Endothelial cell of umbilical vein (primary cell): ENCODE measurements at regions of chr21 and their contacts with region 1.

Region 1: DNA sequence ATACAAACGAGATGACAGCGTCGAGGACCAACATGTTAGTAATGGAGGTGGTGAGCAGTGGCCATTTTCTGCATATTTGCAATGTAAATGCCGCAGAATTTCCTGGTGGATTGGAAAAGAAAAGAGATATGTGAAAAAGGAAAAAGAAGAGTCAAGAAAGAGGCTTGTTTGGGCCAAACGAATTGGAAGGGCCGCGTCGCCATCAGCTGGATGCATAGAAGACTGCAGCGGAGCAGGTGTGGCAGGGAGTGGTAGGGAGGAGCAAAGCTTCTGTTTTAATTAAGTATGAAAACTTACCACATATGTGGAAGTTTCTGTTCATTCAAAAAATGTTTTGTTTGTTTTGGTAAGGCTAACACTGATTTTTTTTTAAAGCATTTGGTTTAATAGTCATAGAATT is 690.7 kb downstream of the NCAM2 start:
- DNase-seq: no peak
- H3K4me3 ChIP-seq: no peak overlapping the region
- H3K27ac ChIP-seq: no peak overlapping the region
- H3K4me1 ChIP-seq: no peaks in the 10 kb centered on the region
- H3K27me3 ChIP-seq: no peaks in the 10 kb centered on the region
- CTCF ChIP-seq: peak in 1 of 2 donors; percentile 3
- POLR2A ChIP-seq: no peak

Region 2: DNA sequence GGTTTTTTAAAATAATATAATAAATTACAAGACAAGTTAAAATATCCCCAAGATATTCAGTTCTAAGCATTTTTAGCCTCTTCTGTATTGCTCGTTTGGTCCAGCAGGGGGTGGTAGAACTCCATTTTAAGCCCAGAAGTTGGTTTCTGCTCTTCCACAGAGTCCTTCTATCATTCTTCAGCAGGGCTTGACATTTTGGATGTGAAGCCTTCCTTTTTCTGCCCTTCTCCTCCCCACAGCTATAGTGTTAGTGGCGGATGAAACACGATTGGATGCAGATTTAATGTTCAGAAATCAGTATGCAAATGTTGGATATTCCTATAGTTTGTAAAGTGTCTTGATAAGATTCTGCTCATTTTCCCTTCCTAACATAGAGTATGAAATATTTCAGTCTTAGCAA is 689.2 kb before region 1 on chr21:
- CTCF ChIA-PET with region 1: interaction called, 3 read pairs
- POLR2A ChIA-PET with region 1: no interaction called
- dilution Hi-C with region 1: no loop called
- intact Hi-C with region 1: loop called (anchors 2 kb)
- DNase-seq: peak; percentile 46
- H3K4me3 ChIP-seq: no peak overlapping the region
- H3K27ac ChIP-seq: no peak overlapping the region
- H3K4me1 ChIP-seq: peaks cover 9% of the 10 kb centered on the region
- H3K27me3 ChIP-seq: peaks cover 6 to 10% of the 10 kb centered on the region in 2 experiments
- CTCF ChIP-seq: peak; percentile 46 to 58
- POLR2A ChIP-seq: no peak

Region 3: GRCh38 chr21:21232320-21232719 is 456.6 kb before region 1 on chr21:
- CTCF ChIA-PET with region 1: interaction called, 3 read pairs
- POLR2A ChIA-PET with region 1: no interaction called
- dilution Hi-C with region 1: no loop called
- intact Hi-C with region 1: loop called (anchors 10 kb)
- DNase-seq: peak; percentile 22
- H3K4me3 ChIP-seq: no peak overlapping the region
- H3K27ac ChIP-seq: no peak overlapping the region
- H3K4me1 ChIP-seq: no peaks in the 10 kb centered on the region
- H3K27me3 ChIP-seq: no peaks in the 10 kb centered on the region
- CTCF ChIP-seq: no peak
- POLR2A ChIP-seq: no peak